ENCODE measurements at regions of chr6 and their contacts with region 1.

Region 1: GRCh38 chr6:132530293-132530974 is 7.6 kb upstream of the TAAR9 start:
- DNase-seq: no peak
- ATAC-seq: peak; percentile 82
- H3K4me3 Mint-ChIP-seq: peak overlapping the region; percentile 83
- H3K27ac Mint-ChIP-seq: no peak overlapping the region
- H3K4me1 Mint-ChIP-seq: peaks cover 8% of the 10 kb centered on the region
- H3K27me3 Mint-ChIP-seq: no peaks in the 10 kb centered on the region
- CTCF ChIP-seq: no peak

Region 2: GRCh38 chr6:132512638-132513632 is 17.5 kb before region 1 on chr6 and contains the start of gene STX7:
- CTCF ChIA-PET with region 1: interaction called, 5 read pairs
- POLR2A ChIA-PET with region 1: interaction called, 11 read pairs
- intact Hi-C with region 1: loop called (anchors 1 kb)
- DNase-seq: peak; percentile 89
- ATAC-seq: peak; percentile 82
- H3K4me3 Mint-ChIP-seq: peak within 1 kb of the TSS; percentile 96
- H3K27ac Mint-ChIP-seq: peak within 1 kb of the TSS; percentile 97
- H3K4me1 Mint-ChIP-seq: peaks cover 68% of the 10 kb centered on the region
- H3K27me3 Mint-ChIP-seq: no peaks in the 10 kb centered on the region
- CTCF ChIP-seq: no peak
- total RNA-seq, gene STX7: 109 and 138 TPM in 2 replicates

Region 3: GRCh38 chr6:132798869-132799538 is 268.6 kb after region 1 on chr6:
- CTCF ChIA-PET with region 1: interaction called, 6 read pairs
- POLR2A ChIA-PET with region 1: interaction called, 4 read pairs
- intact Hi-C with region 1: loop called (anchors 1 kb)
- DNase-seq: peak; percentile 52
- ATAC-seq: peak; percentile 76
- H3K4me3 Mint-ChIP-seq: no peak overlapping the region
- H3K27ac Mint-ChIP-seq: no peak overlapping the region
- H3K4me1 Mint-ChIP-seq: peaks cover 14% of the 10 kb centered on the region
- H3K27me3 Mint-ChIP-seq: no peaks in the 10 kb centered on the region
- CTCF ChIP-seq: no peak

Region 4: GRCh38 chr6:133040094-133040802 is 509.8 kb after region 1 on chr6:
- CTCF ChIA-PET with region 1: no interaction called
- POLR2A ChIA-PET with region 1: no interaction called
- intact Hi-C with region 1: loop called (anchors 1 kb)
- DNase-seq: no peak
- ATAC-seq: no peak
- H3K4me3 Mint-ChIP-seq: no peak overlapping the region
- H3K27ac Mint-ChIP-seq: no peak overlapping the region
- H3K4me1 Mint-ChIP-seq: no peaks in the 10 kb centered on the region
- H3K27me3 Mint-ChIP-seq: peaks cover 2% of the 10 kb centered on the region
- CTCF ChIP-seq: no peak

Region 5: GRCh38 chr6:133085896-133086295 is 555.5 kb after region 1 on chr6:
- CTCF ChIA-PET with region 1: no interaction called
- POLR2A ChIA-PET with region 1: no interaction called
- intact Hi-C with region 1: no loop called
- DNase-seq: no peak
- ATAC-seq: no peak
- H3K4me3 Mint-ChIP-seq: no peak overlapping the region
- H3K27ac Mint-ChIP-seq: no peak overlapping the region
- H3K4me1 Mint-ChIP-seq: no peaks in the 10 kb centered on the region
- H3K27me3 Mint-ChIP-seq: no peaks in the 10 kb centered on the region
- CTCF ChIP-seq: no peak

Region 6: GRCh38 chr6:133916650-133917151 is 1386.3 kb after region 1 on chr6:
- CTCF ChIA-PET with region 1: no interaction called
- POLR2A ChIA-PET with region 1: no interaction called
- intact Hi-C with region 1: loop called (anchors 1 kb)
- DNase-seq: peak; percentile 40
- ATAC-seq: peak; percentile 34
- H3K4me3 Mint-ChIP-seq: no peak overlapping the region
- H3K27ac Mint-ChIP-seq: no peak overlapping the region
- H3K4me1 Mint-ChIP-seq: peaks cover 4% of the 10 kb centered on the region
- H3K27me3 Mint-ChIP-seq: peaks cover 17% of the 10 kb centered on the region
- CTCF ChIP-seq: peak; percentile 76

Region 7: GRCh38 chr6:133973109-133973971 is 1442.9 kb after region 1 on chr6:
- CTCF ChIA-PET with region 1: no interaction called
- POLR2A ChIA-PET with region 1: no interaction called
- intact Hi-C with region 1: no loop called
- DNase-seq: no peak
- ATAC-seq: peak; percentile 61
- H3K4me3 Mint-ChIP-seq: no peak overlapping the region
- H3K27ac Mint-ChIP-seq: no peak overlapping the region
- H3K4me1 Mint-ChIP-seq: peaks cover 21% of the 10 kb centered on the region
- H3K27me3 Mint-ChIP-seq: no peaks in the 10 kb centered on the region
- CTCF ChIP-seq: peak; percentile 86

Measured in activated B cell treated with CpG ODN at 0.5 μM for 24 hours (primary cell).